ENCODE measurements at regions of chr13 and their contacts with region 1.

Region 1: DNA sequence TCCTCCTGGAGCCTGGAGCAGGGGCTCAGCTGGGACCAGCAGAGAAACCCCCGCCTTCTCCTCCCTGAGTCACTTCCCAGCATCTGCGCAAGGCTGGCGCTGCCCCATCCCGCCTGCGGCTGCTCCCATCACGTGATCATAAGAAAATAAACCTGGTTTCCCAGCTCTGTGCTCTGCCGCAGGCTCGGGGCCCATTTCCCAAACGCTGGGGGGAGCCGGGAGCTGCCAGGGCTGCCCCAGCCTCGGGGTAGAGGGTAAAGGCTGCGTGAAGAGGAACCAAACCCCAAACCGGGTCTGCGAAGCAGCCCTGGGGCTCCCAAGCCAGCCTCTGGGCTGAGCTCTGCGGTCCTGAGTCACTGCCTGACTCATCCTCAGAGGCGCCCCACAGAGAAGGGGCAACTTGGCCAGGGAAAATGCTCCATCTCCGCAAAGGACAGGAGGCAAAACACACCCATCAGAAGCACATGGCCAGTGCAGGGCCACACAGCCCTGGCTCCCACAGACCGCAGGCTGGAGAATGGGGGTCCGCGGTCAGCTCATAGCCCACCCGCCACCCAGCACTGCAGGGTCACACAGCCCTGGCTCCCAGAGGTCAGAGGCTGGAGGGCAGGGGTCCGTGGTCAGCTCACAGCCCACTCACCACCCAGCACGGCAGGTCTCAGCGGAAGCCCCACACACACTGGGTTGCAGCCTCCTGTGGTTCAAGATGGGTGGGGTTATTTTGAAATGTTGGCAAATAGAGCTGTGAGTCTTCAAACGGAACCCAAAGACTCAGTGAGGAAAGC is 67.1 kb downstream of the RASA3 start:
- DNase-seq: peak; percentile 96
- H3K4me3 ChIP-seq: no peak overlapping the region
- H3K27ac ChIP-seq: peak overlapping the region; percentile 95
- H3K4me1 ChIP-seq: peaks cover 51% of the 10 kb centered on the region
- H3K27me3 ChIP-seq: no peaks in the 10 kb centered on the region
- CTCF ChIP-seq: no peak
- POLR2A ChIP-seq: peak; percentile 51

Region 2: DNA sequence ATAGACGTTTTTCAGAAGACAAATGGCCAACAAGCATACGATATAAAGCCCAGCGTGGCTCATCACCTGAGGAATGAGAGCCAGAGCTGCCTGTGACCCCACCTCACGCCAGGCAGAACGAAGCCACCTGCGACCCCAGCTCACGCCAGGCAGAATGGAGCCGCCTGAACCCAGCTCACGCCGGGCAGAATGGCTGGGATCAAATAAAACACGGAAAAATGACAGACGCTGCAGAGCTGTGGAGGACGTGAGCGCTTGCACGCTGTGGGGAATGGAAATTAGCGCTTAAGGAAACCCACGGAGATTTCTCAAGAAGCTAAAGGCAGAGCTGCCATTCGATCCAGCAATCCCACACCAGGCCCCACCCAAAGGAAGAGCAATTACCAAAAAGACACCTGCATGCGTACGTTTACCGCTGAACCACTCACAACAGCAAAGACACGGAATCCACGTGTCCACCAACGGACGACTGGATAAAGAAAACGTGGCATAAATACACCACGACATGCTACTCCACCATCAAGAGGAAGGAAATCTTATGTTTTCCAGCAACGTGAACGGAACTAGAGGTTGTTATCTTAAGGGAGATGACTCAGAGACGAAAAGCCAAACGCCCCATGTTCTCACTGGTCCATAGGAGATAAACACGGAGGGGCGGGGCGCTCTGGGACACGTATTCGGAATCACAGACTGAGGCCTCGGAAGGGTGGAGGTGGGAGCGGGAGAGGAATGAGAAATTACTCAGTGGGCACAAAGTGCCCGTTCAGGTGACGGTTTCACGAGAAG is 60.7 kb before region 1 on chr13:
- CTCF ChIA-PET with region 1: no interaction called
- POLR2A ChIA-PET with region 1: no interaction called
- dilution Hi-C with region 1: no loop called
- intact Hi-C with region 1: loop called (anchors 2 kb)
- DNase-seq: peak; percentile 96
- H3K4me3 ChIP-seq: no peak overlapping the region
- H3K27ac ChIP-seq: peak overlapping the region; percentile 91
- H3K4me1 ChIP-seq: peaks cover 18% of the 10 kb centered on the region
- H3K27me3 ChIP-seq: no peaks in the 10 kb centered on the region
- CTCF ChIP-seq: no peak
- POLR2A ChIP-seq: peak; percentile 32

Region 3: GRCh38 chr13:114119196-114119595 is 53.9 kb after region 1 on chr13:
- CTCF ChIA-PET with region 1: interaction called, 8 read pairs
- POLR2A ChIA-PET with region 1: interaction called, 11 read pairs
- dilution Hi-C with region 1: no loop called
- intact Hi-C with region 1: loop called (anchors 1 kb)
- DNase-seq: peak; percentile 97
- H3K4me3 ChIP-seq: peak overlapping the region in 1 of 3 experiments; percentile 13
- H3K27ac ChIP-seq: peak overlapping the region; percentile 99
- H3K4me1 ChIP-seq: peaks cover 49% of the 10 kb centered on the region
- H3K27me3 ChIP-seq: no peaks in the 10 kb centered on the region
- CTCF ChIP-seq: no peak
- POLR2A ChIP-seq: peak; percentile 35

Region 4: GRCh38 chr13:114298866-114299265 is 233.5 kb after region 1 on chr13:
- CTCF ChIA-PET with region 1: no interaction called
- POLR2A ChIA-PET with region 1: no interaction called
- dilution Hi-C with region 1: no loop called
- intact Hi-C with region 1: no loop called
- DNase-seq: no peak
- H3K4me3 ChIP-seq: no peak overlapping the region
- H3K27ac ChIP-seq: no peak overlapping the region
- H3K4me1 ChIP-seq: no peaks in the 10 kb centered on the region
- H3K27me3 ChIP-seq: no peaks in the 10 kb centered on the region
- CTCF ChIP-seq: no peak
- POLR2A ChIP-seq: no peak